ENCODE measurements at regions of chr14 and their contacts with region 1.

Region 1: DNA sequence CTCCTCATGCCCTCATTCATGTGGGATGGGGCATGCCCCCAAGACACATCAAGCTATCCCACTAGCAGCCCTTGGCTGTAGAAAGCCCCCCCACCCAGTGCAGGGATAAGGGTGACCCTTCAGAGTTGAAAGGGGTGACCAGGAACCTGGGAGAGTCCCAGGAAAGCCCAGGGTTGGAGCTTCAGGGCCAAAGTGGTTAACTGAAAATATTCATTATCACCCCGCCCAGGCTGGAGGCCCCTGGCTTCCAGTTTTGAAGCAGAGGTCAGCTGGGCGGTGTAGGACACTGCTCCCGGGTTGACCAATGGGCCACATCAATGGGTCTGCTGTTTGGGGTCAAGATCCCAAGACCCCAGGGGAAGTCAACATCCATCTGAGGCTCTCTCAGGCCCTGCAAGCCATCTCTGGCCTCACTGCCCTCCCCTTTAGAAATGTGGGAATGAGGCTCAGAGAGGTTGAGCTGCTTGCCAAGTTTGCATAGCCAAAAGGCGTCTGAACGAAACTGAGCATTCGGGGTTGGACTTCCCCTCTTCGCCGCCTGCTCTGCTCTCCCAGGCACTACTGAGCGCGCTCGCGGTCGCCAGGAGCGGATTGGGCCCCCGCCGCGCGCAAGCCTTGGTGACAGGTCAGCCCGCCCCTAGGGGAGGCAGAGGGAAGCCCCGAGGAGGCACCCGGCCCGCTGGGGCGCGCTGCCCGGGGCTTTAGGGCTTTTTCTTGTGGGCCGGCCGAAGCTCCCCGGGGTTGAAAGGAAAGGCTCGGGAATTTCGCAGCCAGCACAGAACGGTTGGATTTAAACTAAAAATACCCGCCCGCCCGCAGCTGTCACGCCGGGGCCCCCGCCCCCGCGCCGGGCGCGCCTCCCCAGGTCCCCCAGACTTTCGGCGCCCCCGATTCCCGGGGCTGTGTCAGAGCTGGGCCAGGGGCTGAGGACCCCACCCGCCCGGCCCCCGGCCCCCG is 576 bp downstream of the SYNE3 start:
- DNase-seq: peak; percentile 64 to 94 (median 76)
- ATAC-seq: peak; percentile 85
- H3K4me3 ChIP-seq: peak overlapping the region; percentile 74
- H3K4me3 Mint-ChIP-seq: peak overlapping the region; percentile 87
- H3K27ac ChIP-seq: peak overlapping the region; percentile 64 to 80
- H3K27ac Mint-ChIP-seq: peak overlapping the region; percentile 84
- H3K4me1 ChIP-seq: peaks cover 72% of the 10 kb centered on the region
- H3K4me1 Mint-ChIP-seq: peaks cover 78% of the 10 kb centered on the region
- H3K27me3 ChIP-seq: no peaks in the 10 kb centered on the region
- H3K27me3 Mint-ChIP-seq: no peaks in the 10 kb centered on the region
- CTCF ChIP-seq: peak; percentile 64

Region 2: DNA sequence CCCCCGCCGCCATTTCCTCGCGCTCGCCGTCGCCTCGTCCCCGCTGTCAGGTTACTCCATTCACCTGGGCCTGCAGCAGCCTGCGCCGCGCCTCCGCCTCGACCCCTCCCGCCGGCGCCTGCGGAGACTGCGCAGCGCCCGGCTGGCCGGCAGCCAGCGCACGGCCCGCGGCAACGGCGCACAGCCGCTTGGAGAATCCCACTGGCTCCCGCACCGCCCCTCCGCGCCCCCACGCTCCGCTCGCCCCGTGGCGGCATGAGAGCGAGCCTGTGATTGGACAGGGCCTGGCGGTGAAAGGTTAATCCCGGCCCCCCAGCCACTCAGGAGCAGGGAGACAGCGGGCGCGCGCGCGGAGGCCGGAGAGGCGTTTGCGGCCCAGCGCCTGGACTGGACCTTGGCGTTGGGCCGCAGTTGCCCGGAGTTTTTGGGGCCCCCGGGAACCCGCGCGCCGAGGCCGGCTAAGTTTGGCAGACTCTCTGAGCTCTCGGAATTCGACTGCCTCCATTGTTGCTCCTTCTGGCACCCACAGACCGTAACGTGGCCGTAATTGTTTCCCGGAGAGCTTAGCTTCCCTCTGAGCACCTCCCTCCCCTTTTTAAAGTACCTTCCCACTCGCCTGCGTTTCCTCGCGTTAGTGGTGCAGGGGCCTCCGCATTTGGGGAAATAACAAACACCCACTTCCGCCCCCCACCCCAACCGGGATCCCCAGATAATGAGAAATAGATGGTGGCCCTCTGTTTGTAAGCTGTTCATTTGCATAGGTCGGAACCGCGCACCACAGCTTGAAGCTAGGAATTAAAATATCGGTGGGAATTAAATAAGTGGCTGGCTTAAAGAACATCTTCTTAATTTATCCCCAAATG is 358.3 kb before region 1 on chr14 and contains the start of gene DICER1:
- CTCF ChIA-PET with region 1: no interaction called
- POLR2A ChIA-PET with region 1: interaction called, 3 read pairs
- intact Hi-C with region 1: loop called in 1 of 2 experiments (anchors 5 kb)
- DNase-seq: peak; percentile 89 to 96 (median 93)
- ATAC-seq: peak; percentile 73
- H3K4me3 ChIP-seq: peak within 1 kb of the TSS; percentile 83
- H3K4me3 Mint-ChIP-seq: peak within 1 kb of the TSS; percentile 99
- H3K27ac ChIP-seq: peak within 1 kb of the TSS; percentile 87 to 93
- H3K27ac Mint-ChIP-seq: peak within 1 kb of the TSS; percentile 100
- H3K4me1 ChIP-seq: peaks cover 28% of the 10 kb centered on the region
- H3K4me1 Mint-ChIP-seq: peaks cover 49% of the 10 kb centered on the region
- H3K27me3 ChIP-seq: no peaks in the 10 kb centered on the region
- H3K27me3 Mint-ChIP-seq: no peaks in the 10 kb centered on the region
- CTCF ChIP-seq: no peak
- total RNA-seq, gene DICER1: 53.7 to 66.0 TPM

Region 3: GRCh38 chr14:95389471-95390011 is 126.3 kb before region 1 on chr14:
- CTCF ChIA-PET with region 1: no interaction called
- POLR2A ChIA-PET with region 1: no interaction called
- intact Hi-C with region 1: no loop called
- DNase-seq: no peak
- ATAC-seq: no peak
- H3K4me3 ChIP-seq: no peak overlapping the region
- H3K4me3 Mint-ChIP-seq: no peak overlapping the region
- H3K27ac ChIP-seq: no peak overlapping the region
- H3K27ac Mint-ChIP-seq: no peak overlapping the region
- H3K4me1 ChIP-seq: no peaks in the 10 kb centered on the region
- H3K4me1 Mint-ChIP-seq: no peaks in the 10 kb centered on the region
- H3K27me3 ChIP-seq: peaks cover 0 to 5% of the 10 kb centered on the region in 2 experiments
- H3K27me3 Mint-ChIP-seq: peaks cover 20% of the 10 kb centered on the region
- CTCF ChIP-seq: no peak

Region 4: GRCh38 chr14:95460647-95461478 is 55.0 kb before region 1 on chr14:
- CTCF ChIA-PET with region 1: interaction called, 4 read pairs
- POLR2A ChIA-PET with region 1: interaction called, 102 read pairs
- intact Hi-C with region 1: loop called (anchors 1 to 2 kb)
- DNase-seq: no peak
- ATAC-seq: no peak
- H3K4me3 ChIP-seq: no peak overlapping the region
- H3K4me3 Mint-ChIP-seq: no peak overlapping the region
- H3K27ac ChIP-seq: peak overlapping the region; percentile 80 to 84
- H3K27ac Mint-ChIP-seq: peak overlapping the region; percentile 95
- H3K4me1 ChIP-seq: peaks cover 64% of the 10 kb centered on the region
- H3K4me1 Mint-ChIP-seq: peaks cover 63% of the 10 kb centered on the region
- H3K27me3 ChIP-seq: no peaks in the 10 kb centered on the region
- H3K27me3 Mint-ChIP-seq: no peaks in the 10 kb centered on the region
- CTCF ChIP-seq: no peak

Region 5: GRCh38 chr14:95495538-95496025 is 20.3 kb before region 1 on chr14:
- CTCF ChIA-PET with region 1: interaction called, 5 read pairs
- POLR2A ChIA-PET with region 1: interaction called, 13 read pairs
- intact Hi-C with region 1: no loop called
- DNase-seq: peak in 4 of 14 experiments; percentile 40 to 71 (median 58)
- ATAC-seq: peak; percentile 66
- H3K4me3 ChIP-seq: no peak overlapping the region
- H3K4me3 Mint-ChIP-seq: no peak overlapping the region
- H3K27ac ChIP-seq: peak overlapping the region; percentile 23 to 70
- H3K27ac Mint-ChIP-seq: peak overlapping the region; percentile 68
- H3K4me1 ChIP-seq: peaks cover 45% of the 10 kb centered on the region
- H3K4me1 Mint-ChIP-seq: peaks cover 84% of the 10 kb centered on the region
- H3K27me3 ChIP-seq: no peaks in the 10 kb centered on the region
- H3K27me3 Mint-ChIP-seq: no peaks in the 10 kb centered on the region
- CTCF ChIP-seq: no peak

Region 6: GRCh38 chr14:95534299-95535225 is 18.7 kb after region 1 on chr14 and contains the start of gene GLRX5:
- CTCF ChIA-PET with region 1: interaction called, 10 read pairs
- POLR2A ChIA-PET with region 1: interaction called, 19 read pairs
- intact Hi-C with region 1: loop called (anchors 2 kb)
- DNase-seq: peak; percentile 94 to 100 (median 96)
- ATAC-seq: peak; percentile 86
- H3K4me3 ChIP-seq: peak within 1 kb of the TSS; percentile 73
- H3K4me3 Mint-ChIP-seq: peak within 1 kb of the TSS; percentile 96
- H3K27ac ChIP-seq: peak within 1 kb of the TSS; percentile 78 to 85
- H3K27ac Mint-ChIP-seq: peak within 1 kb of the TSS; percentile 85
- H3K4me1 ChIP-seq: peaks cover 37% of the 10 kb centered on the region
- H3K4me1 Mint-ChIP-seq: peaks cover 73% of the 10 kb centered on the region
- H3K27me3 ChIP-seq: no peaks in the 10 kb centered on the region
- H3K27me3 Mint-ChIP-seq: no peaks in the 10 kb centered on the region
- CTCF ChIP-seq: no peak
- total RNA-seq, gene GLRX5: 11.3 to 11.9 TPM